Dorsolateral prefrontal cortex (tissue), 120 donors: ENCODE measurements at regions of chr16 and their contacts with region 1.

Region 1: DNA sequence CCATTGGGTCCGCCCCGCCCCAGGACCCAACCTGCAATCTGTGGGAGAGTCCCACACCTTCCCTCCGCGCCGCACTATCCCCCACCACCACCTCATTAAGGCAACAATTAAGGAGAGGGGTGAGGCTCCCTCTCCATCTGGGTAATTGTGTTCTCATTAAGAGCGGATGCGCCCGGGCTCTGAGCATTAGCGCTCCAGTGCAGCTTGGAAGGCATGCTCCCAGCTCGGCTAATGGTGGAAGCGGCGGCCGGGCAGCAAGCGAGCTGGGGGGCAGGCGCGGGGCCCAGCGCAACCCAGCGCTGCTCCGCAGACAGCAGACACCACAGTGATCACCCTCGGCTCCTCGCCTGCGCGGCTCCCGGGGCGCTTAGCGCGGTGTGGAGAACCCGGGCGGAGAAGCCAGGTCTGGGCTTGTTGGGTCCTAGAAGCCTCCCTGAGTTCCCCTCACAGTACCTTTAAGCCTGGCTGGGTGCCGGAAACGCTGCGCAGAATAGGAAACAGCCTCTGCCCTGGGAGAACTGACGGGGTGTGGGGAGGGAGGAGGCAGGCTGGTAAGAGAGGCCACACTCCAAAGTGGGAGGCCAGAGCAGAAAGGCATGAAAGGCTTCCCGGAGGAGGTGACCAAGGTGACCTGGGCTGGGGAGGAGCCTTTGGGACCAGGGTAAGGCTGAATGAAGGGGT is 6.4 kb downstream of the CBLN1 start:
- DNase-seq: peak in 1 of 10 donors; percentile 65
- H3K4me3 ChIP-seq: peak overlapping the region in 1 of 59 donors; percentile 40
- H3K27ac ChIP-seq: peak overlapping the region in 1 of 59 donors; percentile 90
- H3K27me3 ChIP-seq: peaks cover 4 to 89% (median 76%) of the 10 kb centered on the region in 45 donors
- CTCF ChIP-seq: no peak

Region 2: DNA sequence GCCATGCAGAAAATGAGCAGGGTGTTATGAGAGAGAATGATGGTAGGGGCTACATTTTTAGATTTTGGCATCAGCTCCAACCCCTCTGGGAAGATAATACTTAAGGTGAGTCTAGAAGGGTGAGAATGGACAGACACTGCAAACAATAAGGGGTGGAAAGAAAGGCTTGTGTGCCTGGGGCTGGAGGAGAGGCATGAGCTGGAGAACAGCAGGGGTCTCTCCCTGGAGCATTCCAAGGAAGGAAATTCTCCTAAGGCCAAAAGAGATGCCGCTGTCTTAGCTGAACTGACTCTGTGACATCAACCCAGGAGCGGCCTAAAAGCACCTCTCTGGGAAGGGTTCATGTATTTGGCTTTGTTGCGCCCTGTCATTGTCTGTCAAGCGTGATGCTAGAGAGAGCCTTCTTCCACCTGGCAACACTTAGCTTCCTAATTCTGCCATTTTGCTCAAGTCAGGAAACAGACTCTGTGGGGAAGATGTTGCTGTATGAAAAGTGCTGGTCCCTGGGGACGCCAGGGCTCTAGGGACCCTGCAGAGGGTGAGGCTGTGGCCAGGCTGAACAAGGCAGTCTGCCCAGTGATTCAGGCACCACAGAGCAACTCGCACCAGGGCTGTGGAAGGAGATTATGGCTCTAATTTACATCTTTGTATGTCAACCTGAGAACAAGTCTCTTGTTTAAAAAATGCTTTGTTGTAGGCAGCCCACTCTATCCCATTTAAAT is 219.2 kb before region 1 on chr16:
- intact Hi-C with region 1: loop called in 1 of 2 experiments (anchors 10 kb)
- DNase-seq: no peak
- H3K4me3 ChIP-seq: no peak overlapping the region
- H3K27ac ChIP-seq: no peak overlapping the region
- H3K27me3 ChIP-seq: peaks cover 0 to 8% (median 0%) of the 10 kb centered on the region in 45 donors
- CTCF ChIP-seq: no peak